HepG2 (cell line): ENCODE measurements at regions of chr14 and their contacts with region 1.

Region 1: DNA sequence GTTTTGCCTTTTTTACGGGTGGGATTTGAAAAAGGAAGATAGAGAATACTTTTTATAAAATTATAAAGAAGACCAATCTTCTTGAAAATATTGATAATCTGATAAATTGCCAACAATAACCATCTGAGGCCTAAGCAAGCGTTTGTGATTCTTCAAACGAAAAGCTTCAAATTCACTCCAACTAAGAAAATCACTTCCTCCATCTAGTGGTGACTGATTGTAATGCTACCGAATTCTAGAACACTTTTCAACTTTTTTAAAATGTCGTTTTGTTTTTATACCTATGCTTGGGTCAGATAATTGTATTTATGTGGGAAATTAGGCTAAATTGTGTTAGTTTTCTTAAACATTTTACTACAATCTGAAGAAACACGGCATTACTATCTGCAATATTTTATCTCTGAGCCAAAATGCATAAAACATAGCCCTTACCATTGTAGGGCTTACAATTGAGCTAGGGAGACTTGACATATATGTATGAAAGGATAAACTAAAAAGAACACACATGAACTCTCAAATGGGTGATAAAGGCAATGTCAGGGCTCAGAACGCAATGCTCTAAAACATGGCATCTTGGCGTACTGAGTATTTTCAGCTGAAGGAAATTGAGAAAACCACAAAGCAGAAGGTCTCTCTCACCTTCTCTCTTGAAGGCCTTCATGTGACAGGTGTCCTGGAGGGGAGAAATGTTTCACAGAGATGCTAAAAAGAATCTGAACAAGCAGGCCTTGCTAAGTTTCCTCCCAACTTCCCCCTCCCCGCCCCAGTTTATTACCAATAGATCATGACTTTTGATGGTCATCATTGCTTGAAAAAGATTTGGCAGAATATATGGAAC is 36.8 kb upstream of the G2E3 start:
- DNase-seq: peak; percentile 57
- ATAC-seq: peak; percentile 70
- H3K4me3 ChIP-seq: no peak overlapping the region
- H3K27ac ChIP-seq: no peak overlapping the region
- H3K4me1 ChIP-seq: no peaks in the 10 kb centered on the region
- H3K27me3 ChIP-seq: 0 out of 5 replicates have a peak, but pooled peaks cover 0 to 2% of the 10 kb centered on the region in 2 experiments
- CTCF ChIP-seq: peak; percentile 78
- EP300 ChIP-seq: no peak
- POLR2A ChIP-seq: no peak
- RAD21 ChIP-seq: no peak

Region 2: GRCh38 chr14:30610787-30611343 is 88.7 kb after region 1 on chr14:
- CTCF ChIA-PET with region 1: no interaction called
- POLR2A ChIA-PET with region 1: no interaction called
- in situ Hi-C with region 1: no loop called
- intact Hi-C with region 1: loop called (anchors 1 kb)
- DNase-seq: peak; percentile 75
- ATAC-seq: peak; percentile 75
- H3K4me3 ChIP-seq: no peak overlapping the region
- H3K27ac ChIP-seq: no peak overlapping the region
- H3K4me1 ChIP-seq: no peaks in the 10 kb centered on the region
- H3K27me3 ChIP-seq: no peaks in the 10 kb centered on the region
- CTCF ChIP-seq: peak; percentile 76
- EP300 ChIP-seq: 0 out of 4 replicates have a peak, but pooled peaks of 1 of the 2 experiments have one; percentile 5
- POLR2A ChIP-seq: no peak
- RAD21 ChIP-seq: no peak